PC-3 (cell line): ENCODE measurements at regions of chr10 and their contacts with region 1.

Region 1: DNA sequence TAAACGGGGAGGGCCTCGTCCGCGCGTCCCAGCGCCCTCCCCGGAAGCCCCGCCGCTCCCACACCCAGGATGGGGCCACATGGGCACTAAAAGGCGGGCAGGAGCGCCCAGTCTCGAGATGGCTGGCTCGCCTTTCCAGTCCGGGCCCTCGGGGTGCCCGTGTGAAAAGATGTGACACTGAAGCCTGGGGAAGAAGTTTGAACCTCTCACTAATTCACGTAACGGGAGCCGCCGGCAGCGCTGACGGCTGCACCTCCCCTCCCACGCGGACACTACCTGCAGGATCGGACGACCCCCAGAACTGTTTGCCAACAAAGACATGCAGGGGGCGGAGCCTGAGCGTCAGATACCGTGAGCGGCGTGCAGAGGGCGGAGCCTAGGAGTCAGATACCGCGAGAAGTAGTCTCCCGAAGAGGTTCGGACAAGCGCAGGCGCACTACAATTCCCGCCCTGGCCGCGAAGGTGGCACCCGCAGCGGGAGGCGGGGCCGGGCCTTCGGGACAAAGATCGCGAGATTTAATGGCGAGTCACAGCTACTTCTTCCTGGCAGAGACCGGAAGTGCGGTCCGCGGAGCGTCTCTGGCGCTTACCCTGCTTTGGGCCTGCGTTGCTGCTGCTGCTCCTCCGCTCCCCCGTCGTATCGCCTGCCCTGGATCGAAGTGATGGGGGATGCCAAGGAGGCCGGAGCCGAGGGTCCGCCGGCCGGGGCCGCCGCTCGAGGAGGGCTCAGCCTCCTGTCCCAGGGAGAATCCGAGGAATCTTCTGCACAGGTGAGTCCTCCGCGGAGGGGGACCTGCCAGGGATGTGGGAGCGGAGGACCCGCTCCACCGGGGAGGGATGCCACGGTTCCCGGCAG is at the start of gene EDRF1:
- DNase-seq: peak; percentile 97
- ATAC-seq: peak; percentile 95
- H3K4me3 ChIP-seq: peak within 1 kb of the TSS; percentile 94
- H3K27ac ChIP-seq: peak within 1 kb of the TSS; percentile 52
- H3K4me1 ChIP-seq: peaks cover 15% of the 10 kb centered on the region
- H3K27me3 ChIP-seq: no peaks in the 10 kb centered on the region
- CTCF ChIP-seq: no peak
- total RNA-seq, gene EDRF1: 16.0 and 17.7 TPM in 2 replicates

Region 2: DNA sequence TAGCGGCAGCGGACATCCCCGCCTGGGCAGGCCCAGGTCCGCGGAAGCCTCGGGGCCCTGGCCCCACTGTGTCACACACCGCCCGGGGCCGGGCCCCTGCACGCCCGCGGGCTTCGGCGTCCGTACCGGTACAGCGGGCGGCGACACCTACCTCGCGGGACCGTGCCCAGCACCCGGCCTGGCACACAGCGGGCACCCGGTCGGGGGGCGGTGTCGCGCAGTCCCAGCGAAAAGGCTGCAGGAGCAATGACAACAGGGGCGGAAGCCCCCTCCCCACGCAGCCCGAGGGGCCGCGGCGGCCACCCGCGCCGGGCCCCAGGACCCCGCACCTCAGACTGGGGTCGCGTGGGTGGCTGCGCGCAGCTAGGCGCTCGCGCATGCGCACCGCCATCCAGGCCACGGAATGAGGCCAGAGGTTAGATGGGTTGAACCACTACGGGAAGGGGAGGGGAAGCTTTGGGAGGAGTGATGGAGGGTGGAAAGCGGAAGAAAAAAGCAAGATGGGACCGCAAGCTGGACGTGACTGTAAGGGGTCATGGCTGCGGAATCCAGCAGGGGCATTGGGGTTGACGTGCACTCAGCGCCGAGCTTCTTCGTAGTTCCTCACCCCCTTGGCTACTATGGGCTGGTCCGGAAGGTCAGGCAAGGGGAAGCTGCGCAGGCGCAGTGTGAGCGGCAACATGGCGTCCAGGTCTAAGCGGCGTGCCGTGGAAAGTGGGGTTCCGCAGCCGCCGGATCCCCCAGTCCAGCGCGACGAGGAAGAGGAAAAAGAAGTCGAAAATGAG is 103.7 kb after region 1 on chr10 and contains the starts of genes BCCIP and UROS:
- CTCF ChIA-PET with region 1: no interaction called
- POLR2A ChIA-PET with region 1: no interaction called
- intact Hi-C with region 1: loop called (anchors 10 kb)
- DNase-seq: peak; percentile 75
- ATAC-seq: peak; percentile 65
- H3K4me3 ChIP-seq: peak within 1 kb of the TSS; percentile 100
- H3K27ac ChIP-seq: peak within 1 kb of the TSS; percentile 79
- H3K4me1 ChIP-seq: peaks cover 23% of the 10 kb centered on the region
- H3K27me3 ChIP-seq: no peaks in the 10 kb centered on the region
- CTCF ChIP-seq: no peak
- total RNA-seq, gene BCCIP: 64.8 and 81.5 TPM in 2 replicates
- total RNA-seq, gene UROS: 45.6 and 50.6 TPM in 2 replicates